A549 (cell line): ENCODE measurements at regions of chr3 and their contacts with region 1.

Region 1: DNA sequence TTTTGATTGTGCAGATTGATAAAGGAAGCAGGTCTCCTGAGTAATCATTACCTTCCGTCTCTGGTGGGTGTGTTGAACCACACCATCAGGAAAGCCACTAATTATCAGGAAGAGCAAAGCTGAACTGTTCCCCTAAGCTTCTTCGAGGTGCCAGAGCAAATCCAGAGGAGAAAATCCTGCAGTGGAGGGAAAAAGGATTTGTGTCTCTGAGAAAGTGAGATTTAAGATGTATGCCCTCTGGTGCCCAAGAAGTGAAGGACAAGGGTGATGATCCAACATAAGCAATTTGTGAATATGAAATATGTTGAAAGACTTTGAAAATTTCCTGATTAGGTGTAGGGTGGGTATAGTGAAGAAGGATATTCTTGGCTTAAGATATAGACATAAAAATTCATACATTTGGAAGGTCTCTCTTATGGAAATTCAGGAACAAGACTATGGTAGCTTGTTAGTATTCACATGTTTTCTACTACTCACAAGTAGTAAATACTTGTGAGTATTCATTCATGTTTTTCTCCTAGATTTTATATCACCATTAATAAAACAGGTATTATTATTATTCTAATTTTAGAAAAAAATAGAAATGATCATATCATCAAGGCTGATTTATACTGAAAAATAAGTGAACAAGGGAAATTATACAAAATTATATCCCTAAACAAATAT is 34.8 kb downstream of the COMMD2 start:
- DNase-seq: peak; percentile 31 to 83
- ATAC-seq: peak; percentile 85 to 87
- H3K4me3 ChIP-seq: no peak overlapping the region
- H3K27ac ChIP-seq: peak overlapping the region; percentile 58 to 64
- H3K4me1 ChIP-seq: peaks cover 6% of the 10 kb centered on the region
- CTCF ChIP-seq: peak; percentile 85
- EP300 ChIP-seq: no peak
- POLR2A ChIP-seq: no peak
- RAD21 ChIP-seq: peak; percentile 81 to 84

Region 2: DNA sequence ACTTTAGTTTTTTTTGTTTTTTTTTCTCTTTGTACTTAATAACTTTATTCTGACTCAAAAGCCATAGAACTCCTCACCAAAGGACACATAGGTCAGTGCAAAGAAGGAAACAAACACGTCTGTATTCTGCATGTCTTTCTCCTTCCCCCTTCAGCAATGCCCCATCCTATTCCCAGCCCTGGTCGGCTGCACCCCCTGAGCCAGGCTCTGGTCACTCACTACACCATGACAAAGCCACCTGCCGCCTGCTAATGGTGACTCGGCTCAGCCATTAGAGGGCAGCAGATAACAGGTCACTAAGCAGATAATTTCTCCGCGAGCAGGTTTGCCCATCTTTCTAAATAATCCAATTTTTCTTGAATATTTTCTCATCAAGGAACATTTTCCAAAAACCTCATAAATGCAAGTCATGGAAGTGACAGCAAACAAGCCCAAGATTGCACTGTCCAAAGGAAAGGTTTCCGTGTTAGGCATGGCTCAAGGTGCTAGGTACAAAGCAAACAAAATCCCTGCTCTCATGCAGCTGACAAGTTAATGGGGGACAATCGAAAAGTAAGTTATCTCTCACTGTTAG is 205.2 kb before region 1 on chr3:
- CTCF ChIA-PET with region 1: interaction called, 52 read pairs
- POLR2A ChIA-PET with region 1: no interaction called
- DNase-seq: peak; percentile 78 to 82
- ATAC-seq: peak; percentile 86 to 87
- H3K4me3 ChIP-seq: no peak overlapping the region
- H3K27ac ChIP-seq: peak overlapping the region; percentile 54 to 58; a peak in 5 of 6 replicates
- H3K4me1 ChIP-seq: peaks cover 14% of the 10 kb centered on the region; the same call in 2 of the 3 replicates
- CTCF ChIP-seq: peak; percentile 94
- EP300 ChIP-seq: no peak
- POLR2A ChIP-seq: no peak
- RAD21 ChIP-seq: peak; percentile 97

Region 3: DNA sequence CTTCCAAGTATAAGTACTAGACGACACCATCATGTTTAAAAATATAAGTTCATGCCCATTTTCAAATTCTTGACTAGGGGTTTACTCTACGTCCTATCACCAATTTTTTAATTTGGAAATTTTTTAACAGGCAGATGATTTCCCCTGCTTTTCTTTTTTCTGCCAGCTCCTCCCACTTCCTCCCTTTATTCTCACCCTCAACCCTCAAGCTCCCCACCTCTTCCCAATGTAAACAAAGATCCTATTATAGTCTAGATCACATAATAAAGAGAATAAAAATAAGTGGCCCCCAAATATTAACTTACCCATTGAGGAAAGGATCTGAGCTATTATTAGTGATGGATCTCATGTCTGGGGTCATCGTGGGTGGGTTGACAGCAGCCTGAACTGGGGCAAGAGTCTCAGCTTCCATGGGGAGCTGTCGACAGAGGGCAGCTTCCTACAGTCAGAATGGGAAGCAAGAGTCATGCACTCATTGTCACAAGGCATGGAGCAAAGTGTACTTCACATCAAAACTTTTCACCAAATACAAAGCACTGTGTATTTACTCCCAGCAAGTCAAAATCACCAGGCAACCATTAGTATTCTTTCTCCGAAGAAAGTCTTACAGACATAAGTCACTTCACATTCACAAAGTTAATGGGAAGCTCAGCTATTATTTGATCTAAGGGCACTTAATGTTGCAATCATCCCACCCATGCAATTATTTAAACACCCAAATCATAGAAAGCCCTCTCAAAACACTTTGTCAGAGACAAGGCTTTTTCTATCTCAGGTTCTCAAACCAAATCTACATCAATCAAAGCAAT is 189.8 kb before region 1 on chr3:
- CTCF ChIA-PET with region 1: interaction called, 25 read pairs
- POLR2A ChIA-PET with region 1: interaction called, 3 read pairs
- DNase-seq: peak; percentile 39 to 75
- ATAC-seq: peak; percentile 76 to 83
- H3K4me3 ChIP-seq: no peak overlapping the region
- H3K27ac ChIP-seq: peak overlapping the region; percentile 70 to 81
- H3K4me1 ChIP-seq: peaks cover 59% of the 10 kb centered on the region
- CTCF ChIP-seq: peak; percentile 51
- EP300 ChIP-seq: no peak
- POLR2A ChIP-seq: no peak
- RAD21 ChIP-seq: peak; percentile 41 to 59

Region 4: GRCh38 chr3:149566292-149566975 is 151.1 kb before region 1 on chr3:
- CTCF ChIA-PET with region 1: interaction called, 29 read pairs
- POLR2A ChIA-PET with region 1: no interaction called
- DNase-seq: no peak
- ATAC-seq: peak in 1 of 2 experiments; percentile 28; a peak in 1 of 6 replicates
- H3K4me3 ChIP-seq: no peak overlapping the region
- H3K27ac ChIP-seq: peak overlapping the region; percentile 24 to 74
- H3K4me1 ChIP-seq: peaks cover 76% of the 10 kb centered on the region
- CTCF ChIP-seq: no peak
- EP300 ChIP-seq: no peak
- POLR2A ChIP-seq: no peak
- RAD21 ChIP-seq: no peak

Region 5: GRCh38 chr3:149657926-149658733 is 59.4 kb before region 1 on chr3 and contains the start of gene WWTR1:
- CTCF ChIA-PET with region 1: interaction called, 23 read pairs
- POLR2A ChIA-PET with region 1: interaction called, 3 read pairs
- DNase-seq: peak; percentile 92 to 96
- ATAC-seq: peak; percentile 80 to 87
- H3K4me3 ChIP-seq: peak within 1 kb of the TSS; percentile 90
- H3K27ac ChIP-seq: peak within 1 kb of the TSS; percentile 99
- H3K4me1 ChIP-seq: peaks cover 57% of the 10 kb centered on the region
- CTCF ChIP-seq: no peak
- EP300 ChIP-seq: no peak
- POLR2A ChIP-seq: peak; percentile 66
- RAD21 ChIP-seq: peak; percentile 1 to 27; a peak in 1 of 5 replicates
- polyA plus RNA-seq, gene WWTR1: 164 and 216 TPM in 2 replicates

Region 6: DNA sequence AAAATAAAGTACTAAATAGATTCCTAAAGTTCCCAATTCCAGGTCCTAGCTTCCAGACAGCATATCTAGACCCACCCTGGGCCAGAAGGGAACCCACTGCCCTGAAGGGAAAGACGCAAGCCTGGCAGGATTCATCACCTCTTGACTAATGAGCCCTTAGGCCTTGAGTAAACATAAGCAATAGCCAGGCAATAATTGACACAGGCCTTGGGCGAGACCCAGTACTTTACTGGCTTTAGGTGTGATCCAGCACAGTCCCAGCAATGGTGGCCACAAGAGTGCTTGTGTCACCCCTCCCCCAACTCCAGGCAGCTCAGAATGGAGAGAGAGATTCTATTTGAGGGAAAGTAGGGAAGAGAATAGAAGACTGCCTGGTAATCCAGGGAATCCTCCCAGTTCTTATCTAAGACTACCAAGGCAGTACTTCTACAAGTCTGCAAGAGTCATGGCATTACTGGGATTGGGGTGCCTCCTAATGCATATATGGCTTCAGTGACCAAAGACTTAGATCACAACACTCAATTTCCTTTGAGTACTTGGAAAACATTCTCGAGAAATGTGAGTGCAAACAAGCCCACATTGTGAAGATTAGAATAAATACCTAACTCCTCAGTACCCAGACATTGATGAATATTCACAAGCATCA is 29.3 kb before region 1 on chr3:
- CTCF ChIA-PET with region 1: interaction called, 11 read pairs
- POLR2A ChIA-PET with region 1: no interaction called
- DNase-seq: no peak
- ATAC-seq: no peak
- H3K4me3 ChIP-seq: no peak overlapping the region
- H3K27ac ChIP-seq: no peak overlapping the region
- H3K4me1 ChIP-seq: no peaks in the 10 kb centered on the region
- CTCF ChIP-seq: no peak
- EP300 ChIP-seq: no peak
- POLR2A ChIP-seq: no peak
- RAD21 ChIP-seq: 0 out of 5 replicates have a peak, but pooled peaks of 1 of the 2 experiments have one; percentile 4

Region 7: GRCh38 chr3:149736175-149736952 is 18.8 kb after region 1 on chr3:
- CTCF ChIA-PET with region 1: interaction called, 11 read pairs
- POLR2A ChIA-PET with region 1: no interaction called
- DNase-seq: peak in 1 of 2 experiments; percentile 25
- ATAC-seq: no peak
- H3K4me3 ChIP-seq: no peak overlapping the region
- H3K27ac ChIP-seq: peak overlapping the region in 1 of 2 experiments; percentile 4; a peak in 1 of 6 replicates
- H3K4me1 ChIP-seq: peaks cover 7% of the 10 kb centered on the region; the same call in 1 of the 3 replicates
- CTCF ChIP-seq: no peak
- EP300 ChIP-seq: no peak
- POLR2A ChIP-seq: no peak
- RAD21 ChIP-seq: no peak